Breast epithelium (tissue), 4 donors: ENCODE measurements at regions of chr19 and their contacts with region 1.

Region 1: DNA sequence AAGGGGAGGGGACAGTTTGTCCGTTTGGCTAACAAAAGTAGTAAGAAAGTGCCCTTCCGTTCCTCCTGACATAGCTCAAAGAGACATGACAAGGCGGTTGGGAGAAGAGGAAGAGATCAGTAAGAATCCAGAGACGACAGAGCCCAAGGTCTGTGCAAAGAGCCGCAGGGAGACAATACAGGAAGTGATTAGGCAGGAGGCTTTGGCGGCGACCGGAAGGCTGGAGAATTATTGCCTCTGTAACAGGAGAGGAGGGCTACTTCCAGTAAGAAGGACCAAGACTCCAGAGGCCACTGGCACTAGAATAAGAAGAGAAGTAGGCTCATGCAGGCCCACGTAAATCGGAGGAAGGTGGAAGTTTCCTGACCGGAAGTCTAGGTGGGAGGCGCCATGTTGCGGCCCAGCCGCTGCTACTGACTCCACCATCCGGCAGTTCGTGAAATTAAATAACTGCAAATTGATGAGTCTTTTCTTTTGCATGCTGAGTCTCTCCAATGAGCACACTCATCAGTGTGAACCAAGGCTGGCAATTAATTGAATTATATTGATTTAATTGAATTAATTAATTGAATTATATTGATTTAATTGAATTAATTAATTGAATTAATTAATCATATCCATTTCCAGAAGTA is 9.9 kb downstream of the RFX2 start:
- DNase-seq: no peak
- H3K4me3 ChIP-seq: peak overlapping the region in 2 of 3 donors; percentile 5 to 14
- H3K27ac ChIP-seq: peak overlapping the region; percentile 43 to 76
- H3K4me1 ChIP-seq: no peaks in the 10 kb centered on the region
- H3K27me3 ChIP-seq: no peaks in the 10 kb centered on the region
- CTCF ChIP-seq: no peak
- POLR2A ChIP-seq: no peak

Region 2: DNA sequence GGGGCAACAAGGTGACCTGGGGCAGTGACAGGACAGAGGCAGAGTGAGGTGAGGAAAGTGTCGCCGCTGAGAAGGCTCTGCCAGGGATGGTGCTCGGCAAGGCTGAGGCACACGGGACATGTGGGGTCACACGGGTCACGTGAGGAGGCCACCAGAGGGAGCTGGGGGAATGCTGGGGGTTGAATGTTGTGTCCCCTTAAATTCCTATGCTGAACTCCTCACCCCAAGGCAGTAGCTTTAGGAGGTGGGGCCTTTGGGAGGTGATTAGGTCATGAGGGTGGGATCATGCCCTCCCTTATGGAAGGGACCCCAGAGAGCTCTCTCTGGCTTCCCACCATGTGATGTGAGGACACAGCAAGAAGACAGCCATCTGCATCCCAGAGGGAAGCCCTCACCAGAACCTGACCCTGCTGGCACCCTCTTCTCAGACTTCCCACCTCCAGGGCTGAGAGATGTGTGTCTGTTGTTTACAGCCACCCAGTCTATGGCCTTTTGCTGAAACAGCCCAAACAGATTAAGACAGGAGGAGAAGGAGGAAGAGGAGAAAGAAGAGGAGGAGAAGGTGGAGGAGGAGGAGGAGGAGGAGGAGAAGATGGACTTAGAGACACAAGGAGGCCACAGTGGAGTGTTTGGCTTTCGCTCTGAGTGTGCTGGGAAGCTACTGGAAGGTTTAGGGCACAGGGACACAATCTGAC is 25.5 kb before region 1 on chr19:
- intact Hi-C with region 1: loop called (anchors 1 kb)
- DNase-seq: peak in 1 of 2 donors; percentile 13
- H3K4me3 ChIP-seq: no peak overlapping the region
- H3K27ac ChIP-seq: peak overlapping the region in 1 of 2 donors; percentile 19
- H3K4me1 ChIP-seq: no peaks in the 10 kb centered on the region
- H3K27me3 ChIP-seq: no peaks in the 10 kb centered on the region
- CTCF ChIP-seq: no peak
- POLR2A ChIP-seq: no peak

Region 3: GRCh38 chr19:6110360-6110977 is 10.1 kb after region 1 on chr19 and contains the start of gene RFX2:
- intact Hi-C with region 1: loop called (anchors 2 kb)
- DNase-seq: peak; percentile 99 to 100
- H3K4me3 ChIP-seq: peak within 1 kb of the TSS; percentile 78
- H3K27ac ChIP-seq: peak within 1 kb of the TSS; percentile 83 to 87
- H3K4me1 ChIP-seq: peaks cover 0 to 9% of the 10 kb centered on the region in 2 donors
- H3K27me3 ChIP-seq: no peaks in the 10 kb centered on the region
- CTCF ChIP-seq: no peak
- POLR2A ChIP-seq: peak; percentile 55
- total RNA-seq, gene RFX2: 6.1 to 16.2 (median 9.2) TPM